Endothelial cell of umbilical vein (primary cell): ENCODE measurements at regions of chr19 and their contacts with region 1.

Region 1: DNA sequence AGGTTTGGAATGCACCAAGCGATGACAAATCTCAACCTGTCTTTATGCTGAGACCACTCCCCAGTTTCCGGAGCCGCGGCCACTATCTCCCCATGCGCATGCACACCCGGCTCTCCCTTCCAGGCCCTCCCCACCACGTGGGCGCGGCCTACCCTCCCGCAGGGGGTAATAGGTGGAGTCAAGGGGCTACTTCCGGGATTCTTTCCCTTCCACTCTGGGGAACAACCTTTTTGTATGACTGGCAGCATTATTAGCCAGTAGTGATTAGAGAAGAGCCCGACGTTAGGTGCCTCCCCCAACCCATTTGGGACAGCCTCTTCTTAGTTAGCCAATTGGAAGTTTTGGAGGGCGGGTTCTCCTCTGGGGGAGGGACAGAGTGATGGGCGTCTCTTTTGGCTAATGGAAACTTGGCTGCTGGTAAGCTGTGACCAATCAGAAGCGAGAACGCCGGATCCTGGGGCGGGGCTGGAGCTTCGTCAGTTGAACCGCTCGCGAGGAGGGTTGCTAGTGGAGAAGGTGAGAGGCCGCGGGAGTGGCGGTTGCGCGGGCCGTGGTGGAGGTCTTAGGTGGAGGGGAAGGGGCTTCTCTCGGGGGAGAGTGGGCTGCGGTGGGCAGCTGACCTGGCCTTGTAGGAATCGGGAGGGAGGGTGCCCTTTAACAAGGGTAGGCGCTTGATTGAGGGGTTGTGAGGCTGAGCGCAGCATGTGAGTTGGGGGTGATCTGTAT is at the start of gene CCDC61:
- DNase-seq: peak; percentile 100
- H3K4me3 ChIP-seq: peak within 1 kb of the TSS; percentile 69 to 99 (median 95)
- H3K27ac ChIP-seq: peak within 1 kb of the TSS; percentile 64
- H3K4me1 ChIP-seq: peaks cover 10% of the 10 kb centered on the region
- H3K27me3 ChIP-seq: peaks cover 0 to under 1% of the 10 kb centered on the region in 2 experiments
- CTCF ChIP-seq: no peak
- POLR2A ChIP-seq: peak; percentile 90
- total RNA-seq, gene CCDC61: 14.8 and 20.1 TPM in 2 replicates

Region 2: DNA sequence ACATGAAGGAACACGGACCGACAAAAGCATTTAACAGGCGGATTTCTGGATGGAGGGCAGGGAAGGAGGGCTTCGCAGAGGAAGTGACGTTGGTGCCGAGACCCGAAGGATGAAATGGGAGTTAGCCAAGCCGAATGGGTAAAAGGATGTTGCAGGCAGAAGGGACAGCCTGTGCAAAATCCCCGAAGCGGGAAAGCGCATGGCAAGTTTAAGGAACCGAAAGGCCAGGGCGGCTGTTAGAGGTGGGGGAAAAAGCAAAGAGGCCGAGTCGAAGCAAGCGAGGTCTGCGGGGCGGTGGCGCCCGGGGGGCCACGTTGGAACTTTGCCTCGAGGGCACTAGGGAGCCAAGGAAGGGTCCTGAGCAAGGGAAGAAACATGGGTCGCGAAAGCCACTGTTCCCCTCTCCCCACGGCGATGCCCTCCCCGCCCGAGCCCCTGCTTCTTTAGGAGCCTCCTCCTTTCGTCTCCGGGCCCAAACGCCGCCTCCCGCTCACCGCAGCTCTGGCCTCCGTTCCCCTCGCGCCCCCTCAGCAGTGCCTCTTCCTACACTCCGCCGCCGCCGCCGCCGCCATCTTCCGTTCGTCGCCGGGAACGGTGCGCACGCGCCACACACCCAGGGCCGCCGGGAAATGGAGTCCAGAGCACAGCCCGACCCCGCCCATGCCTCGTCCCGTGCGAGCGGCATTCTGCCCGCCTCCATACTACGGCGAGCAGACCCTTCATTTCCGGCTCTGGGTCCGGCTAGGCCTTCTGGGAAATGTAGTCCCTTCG is 132.4 kb before region 1 on chr19 and contains the start of gene SYMPK:
- CTCF ChIA-PET with region 1: no interaction called
- POLR2A ChIA-PET with region 1: no interaction called
- dilution Hi-C with region 1: no loop called
- intact Hi-C with region 1: no loop called
- DNase-seq: peak; percentile 99
- H3K4me3 ChIP-seq: peak within 1 kb of the TSS; percentile 49 to 90 (median 86)
- H3K27ac ChIP-seq: peak within 1 kb of the TSS; percentile 53
- H3K4me1 ChIP-seq: peaks cover 4% of the 10 kb centered on the region
- H3K27me3 ChIP-seq: peaks cover 20 to 22% of the 10 kb centered on the region in 2 experiments
- CTCF ChIP-seq: no peak
- POLR2A ChIP-seq: peak; percentile 90
- total RNA-seq, gene SYMPK: 94.5 and 95.7 TPM in 2 replicates

Region 3: DNA sequence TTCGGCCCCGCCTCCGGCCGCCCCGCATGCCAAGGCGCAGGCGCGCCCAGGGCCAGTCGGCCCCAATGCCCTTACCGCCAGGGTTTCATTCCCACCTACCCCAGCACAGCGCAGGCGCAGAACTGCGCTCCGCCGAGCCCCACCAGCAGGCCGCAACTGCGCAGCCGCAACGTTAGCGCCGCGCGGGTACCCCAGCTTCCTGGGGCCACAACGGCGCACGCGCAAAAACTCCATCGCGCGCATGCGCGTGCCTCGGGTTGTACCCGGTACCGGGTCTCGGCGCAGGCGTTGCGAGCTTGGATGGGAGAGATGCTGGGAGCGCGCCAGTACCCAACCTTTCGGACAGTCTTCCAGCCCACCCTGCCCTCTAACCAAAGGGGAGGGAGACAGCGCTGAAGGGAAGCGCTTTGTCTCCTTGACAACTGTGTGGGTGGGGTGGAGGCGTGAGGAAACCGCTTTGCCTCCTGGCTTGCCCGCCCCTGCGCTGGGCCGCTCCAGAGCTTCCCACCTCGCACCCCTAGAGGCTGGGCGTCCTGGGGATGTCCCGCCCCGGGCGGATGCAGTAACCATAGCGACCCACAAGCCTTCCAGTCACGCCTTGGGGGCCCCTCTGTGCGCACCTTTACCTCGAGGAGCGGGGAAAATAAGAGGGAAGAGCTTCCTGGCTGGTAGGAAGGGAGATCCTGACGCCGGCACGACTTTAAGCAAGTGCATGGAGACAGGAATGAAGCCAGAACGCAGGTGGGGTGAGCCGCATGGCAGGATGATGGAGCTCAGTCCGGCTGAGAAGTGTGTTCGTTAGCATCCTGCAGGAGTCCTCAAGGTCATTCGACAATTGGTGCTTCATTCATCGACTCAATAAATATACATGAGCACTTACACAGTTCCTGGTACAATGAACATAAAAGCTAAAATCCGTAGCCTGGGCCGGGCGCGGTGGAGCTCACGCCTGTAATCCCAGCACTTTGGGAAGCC is 92.2 kb before region 1 on chr19:
- CTCF ChIA-PET with region 1: interaction called, 4 read pairs
- POLR2A ChIA-PET with region 1: interaction called, 5 read pairs
- dilution Hi-C with region 1: no loop called
- intact Hi-C with region 1: loop called (anchors 2 kb)
- DNase-seq: peak; percentile 99
- H3K4me3 ChIP-seq: peak overlapping the region; percentile 4 to 55 (median 36)
- H3K27ac ChIP-seq: no peak overlapping the region
- H3K4me1 ChIP-seq: peaks cover 7% of the 10 kb centered on the region
- H3K27me3 ChIP-seq: no peaks in the 10 kb centered on the region
- CTCF ChIP-seq: no peak
- POLR2A ChIP-seq: peak; percentile 94

Region 4: GRCh38 chr19:45955905-45956608 is 39.1 kb before region 1 on chr19:
- CTCF ChIA-PET with region 1: interaction called, 4 read pairs
- POLR2A ChIA-PET with region 1: interaction called, 3 read pairs
- dilution Hi-C with region 1: no loop called
- intact Hi-C with region 1: loop called (anchors 1 kb)
- DNase-seq: peak; percentile 99
- H3K4me3 ChIP-seq: no peak overlapping the region
- H3K27ac ChIP-seq: peak overlapping the region; percentile 85
- H3K4me1 ChIP-seq: peaks cover 43% of the 10 kb centered on the region
- H3K27me3 ChIP-seq: no peaks in the 10 kb centered on the region
- CTCF ChIP-seq: no peak
- POLR2A ChIP-seq: peak; percentile 65

Region 5: GRCh38 chr19:45973578-45974338 is 21.4 kb before region 1 on chr19 and contains the start of gene NOVA2:
- CTCF ChIA-PET with region 1: interaction called, 4 read pairs
- POLR2A ChIA-PET with region 1: no interaction called
- dilution Hi-C with region 1: no loop called
- intact Hi-C with region 1: loop called (anchors 1 kb)
- DNase-seq: peak; percentile 95
- H3K4me3 ChIP-seq: peak within 1 kb of the TSS; percentile 52 to 80 (median 68)
- H3K27ac ChIP-seq: no peak within 1 kb of the TSS
- H3K4me1 ChIP-seq: peaks cover 23% of the 10 kb centered on the region
- H3K27me3 ChIP-seq: peaks cover 2 to 4% of the 10 kb centered on the region in 2 experiments
- CTCF ChIP-seq: no peak
- POLR2A ChIP-seq: no peak
- total RNA-seq, gene NOVA2: 34.2 and 35.2 TPM in 2 replicates

Region 6: DNA sequence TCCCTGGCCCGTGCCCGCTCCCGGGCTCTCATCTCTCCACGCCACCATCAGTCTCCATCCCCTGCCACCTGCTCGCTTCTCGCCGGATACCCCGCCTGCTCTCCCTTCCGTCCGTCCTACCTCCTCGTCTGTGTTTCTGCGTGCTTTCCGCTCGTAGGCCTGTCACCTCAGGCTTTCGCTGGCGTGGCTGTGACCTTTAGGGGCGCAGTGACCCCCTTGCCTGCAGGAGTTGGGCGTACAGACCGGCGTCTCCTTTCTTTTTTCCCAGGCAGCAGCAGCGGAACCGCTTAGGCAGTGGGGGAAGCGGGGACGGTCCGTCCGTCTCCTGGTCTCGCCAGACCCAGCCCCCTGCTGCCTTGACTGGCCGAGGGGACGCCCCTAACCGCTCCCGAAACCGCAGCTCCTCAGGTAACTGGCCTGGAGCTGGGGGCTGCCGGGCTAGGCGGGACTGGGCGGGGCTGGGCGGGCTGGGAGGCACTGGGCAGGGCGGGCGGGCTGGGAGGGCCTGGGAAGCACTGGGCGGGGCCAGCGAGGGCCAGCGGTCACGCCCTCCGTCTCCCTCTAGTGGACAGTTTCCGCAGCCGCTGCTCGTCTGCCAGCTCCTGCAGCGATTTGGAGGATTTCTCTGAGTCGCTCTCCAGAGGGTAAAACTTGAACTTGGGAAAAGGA is 21.4 kb after region 1 on chr19:
- CTCF ChIA-PET with region 1: interaction called, 11 read pairs
- POLR2A ChIA-PET with region 1: interaction called, 3 read pairs
- dilution Hi-C with region 1: no loop called
- intact Hi-C with region 1: no loop called
- DNase-seq: peak; percentile 76
- H3K4me3 ChIP-seq: peak overlapping the region; percentile 47 to 69 (median 59)
- H3K27ac ChIP-seq: no peak overlapping the region
- H3K4me1 ChIP-seq: peaks cover 11% of the 10 kb centered on the region
- H3K27me3 ChIP-seq: peaks cover 4 to 8% of the 10 kb centered on the region in 2 experiments
- CTCF ChIP-seq: peak; percentile 56 to 86
- POLR2A ChIP-seq: no peak